Activated CD4-positive, alpha-beta memory T cell treated with anti-CD3 and anti-CD28 coated beads for 36 hours (primary cell): ENCODE measurements at regions of chr12 and their contacts with region 1.

Region 1: GRCh38 chr12:56104109-56104814 is at the start of gene PA2G4:
- DNase-seq: peak; percentile 99
- H3K4me3 Mint-ChIP-seq: peak within 1 kb of the TSS; percentile 100
- H3K27ac Mint-ChIP-seq: peak within 1 kb of the TSS; percentile 97
- H3K4me1 Mint-ChIP-seq: peaks cover 34% of the 10 kb centered on the region
- H3K27me3 Mint-ChIP-seq: no peaks in the 10 kb centered on the region
- total RNA-seq, gene PA2G4: 399 to 410 TPM

Region 2: GRCh38 chr12:55817346-55818139 is 286.7 kb before region 1 on chr12 and contains the starts of genes ORMDL2 and SARNP:
- CTCF ChIA-PET with region 1: no interaction called
- POLR2A ChIA-PET with region 1: interaction called, 6 read pairs
- intact Hi-C with region 1: loop called (anchors 5 kb)
- DNase-seq: peak; percentile 99
- H3K4me3 Mint-ChIP-seq: no peak within 1 kb of the TSS
- H3K27ac Mint-ChIP-seq: no peak within 1 kb of the TSS
- H3K4me1 Mint-ChIP-seq: peaks cover 49% of the 10 kb centered on the region
- H3K27me3 Mint-ChIP-seq: no peaks in the 10 kb centered on the region
- total RNA-seq, gene ORMDL2: 37.9 to 41.2 TPM
- total RNA-seq, gene SARNP: 104 to 110 TPM

Region 3: DNA sequence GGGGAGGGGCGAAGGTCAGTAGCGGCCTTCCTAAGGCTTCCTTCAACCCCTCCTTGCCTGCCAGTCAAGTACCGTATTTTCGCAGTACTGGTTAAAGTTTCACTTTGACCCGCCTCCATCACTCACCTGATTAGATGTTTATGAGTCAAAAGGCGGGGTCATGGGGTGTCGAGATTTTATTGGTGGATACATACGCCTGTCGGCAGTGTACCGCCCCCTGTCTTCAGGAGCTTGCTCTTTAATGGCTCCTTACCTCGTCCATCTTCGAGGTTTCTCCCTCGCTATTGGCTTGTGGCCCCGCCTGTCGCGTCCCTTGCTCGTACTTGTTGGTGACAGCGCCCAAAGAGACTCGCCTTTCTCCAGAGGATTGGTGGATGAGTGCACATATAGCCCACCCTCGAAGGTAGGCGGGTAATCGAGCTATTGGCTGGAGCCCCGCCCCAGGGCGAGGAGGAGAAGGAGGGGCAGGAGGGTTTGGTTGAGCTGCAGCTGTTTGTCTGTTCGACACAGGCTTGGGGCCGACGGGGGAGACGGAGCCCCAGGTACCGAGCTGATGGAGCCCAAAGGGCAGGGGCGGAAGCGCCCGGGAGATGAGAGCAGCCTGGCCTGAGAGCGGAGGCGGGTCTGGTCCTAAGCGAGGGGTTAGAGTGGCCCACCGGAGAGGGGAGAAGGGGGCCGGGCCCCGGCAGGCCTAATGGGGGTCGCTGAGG is 130.5 kb before region 1 on chr12 and contains the start of gene RAB5B:
- CTCF ChIA-PET with region 1: interaction called, 3 read pairs
- POLR2A ChIA-PET with region 1: interaction called, 10 read pairs
- intact Hi-C with region 1: loop called (anchors 1 kb)
- DNase-seq: peak; percentile 99
- H3K4me3 Mint-ChIP-seq: no peak within 1 kb of the TSS
- H3K27ac Mint-ChIP-seq: no peak within 1 kb of the TSS
- H3K4me1 Mint-ChIP-seq: peaks cover 19% of the 10 kb centered on the region
- H3K27me3 Mint-ChIP-seq: no peaks in the 10 kb centered on the region
- total RNA-seq, gene RAB5B: 44.8 to 46.4 TPM

Region 4: DNA sequence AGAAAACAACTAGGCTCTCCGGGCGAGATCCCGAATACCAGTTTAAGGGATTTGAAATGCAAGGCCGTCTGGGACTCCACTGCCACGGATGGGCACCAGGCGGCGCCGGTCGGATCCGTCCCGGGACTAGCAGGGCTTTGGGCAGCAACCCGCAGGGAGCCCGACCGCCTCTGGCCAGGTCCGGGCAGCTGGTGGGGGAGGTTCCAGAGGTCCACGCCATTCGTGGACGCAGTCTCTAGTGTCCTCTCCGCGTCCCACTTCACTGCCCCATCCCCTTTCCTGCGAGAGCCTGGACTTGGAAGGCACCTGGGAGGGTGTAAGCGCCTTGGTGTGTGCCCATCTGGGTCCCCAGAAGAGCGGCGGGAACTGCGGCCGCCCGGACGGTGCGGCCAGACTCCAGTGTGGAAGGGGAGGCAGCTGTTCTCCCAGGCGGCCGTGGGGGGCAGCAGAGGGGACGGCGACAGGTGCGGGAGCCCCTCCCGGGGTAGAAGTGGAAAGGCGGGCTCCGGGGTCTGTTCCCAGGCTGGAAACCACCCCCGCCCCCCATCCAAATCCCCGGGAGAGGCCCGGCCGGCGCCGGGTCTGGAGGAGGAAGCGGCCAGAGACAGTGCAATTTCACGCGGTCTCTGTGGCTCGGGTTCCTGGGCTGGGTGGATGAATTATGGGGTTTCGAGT is 25.1 kb before region 1 on chr12:
- CTCF ChIA-PET with region 1: interaction called, 22 read pairs
- POLR2A ChIA-PET with region 1: interaction called, 23 read pairs
- intact Hi-C with region 1: loop called (anchors 1 kb)
- DNase-seq: peak; percentile 74
- H3K4me3 Mint-ChIP-seq: peak overlapping the region; percentile 74
- H3K27ac Mint-ChIP-seq: no peak overlapping the region
- H3K4me1 Mint-ChIP-seq: peaks cover 5% of the 10 kb centered on the region
- H3K27me3 Mint-ChIP-seq: peaks cover 7% of the 10 kb centered on the region

Region 5: GRCh38 chr12:56127888-56128669 is 23.8 kb after region 1 on chr12 and contains the start of gene ESYT1:
- CTCF ChIA-PET with region 1: interaction called, 7 read pairs
- POLR2A ChIA-PET with region 1: interaction called, 6 read pairs
- intact Hi-C with region 1: loop called (anchors 1 kb)
- DNase-seq: peak; percentile 99
- H3K4me3 Mint-ChIP-seq: peak within 1 kb of the TSS; percentile 97
- H3K27ac Mint-ChIP-seq: peak within 1 kb of the TSS; percentile 93
- H3K4me1 Mint-ChIP-seq: peaks cover 60% of the 10 kb centered on the region
- H3K27me3 Mint-ChIP-seq: no peaks in the 10 kb centered on the region
- total RNA-seq, gene ESYT1: 142 to 146 TPM